CD8-positive, alpha-beta T cell (primary cell): ENCODE measurements at regions of chr12 and their contacts with region 1.

Region 1: GRCh38 chr12:54958048-54958658 is 26.4 kb downstream of the TESPA1 start:
- DNase-seq: peak; percentile 4 to 78 (median 48)
- ATAC-seq: peak; percentile 67
- H3K4me3 ChIP-seq: no peak overlapping the region
- H3K4me3 Mint-ChIP-seq: no peak overlapping the region
- H3K27ac ChIP-seq: no peak overlapping the region
- H3K27ac Mint-ChIP-seq: peak overlapping the region; percentile 52
- H3K4me1 ChIP-seq: peaks cover 75% of the 10 kb centered on the region
- H3K4me1 Mint-ChIP-seq: peaks cover 85% of the 10 kb centered on the region
- H3K27me3 ChIP-seq: no peaks in the 10 kb centered on the region
- H3K27me3 Mint-ChIP-seq: no peaks in the 10 kb centered on the region
- CTCF ChIP-seq: peak; percentile 75

Region 2: GRCh38 chr12:54603173-54603814 is 354.9 kb before region 1 on chr12:
- CTCF ChIA-PET with region 1: no interaction called
- POLR2A ChIA-PET with region 1: no interaction called
- intact Hi-C with region 1: loop called in 1 of 2 experiments (anchors 10 kb)
- DNase-seq: peak; percentile 34 to 77 (median 66)
- ATAC-seq: peak; percentile 98
- H3K4me3 ChIP-seq: no peak overlapping the region
- H3K4me3 Mint-ChIP-seq: no peak overlapping the region
- H3K27ac ChIP-seq: no peak overlapping the region
- H3K27ac Mint-ChIP-seq: no peak overlapping the region
- H3K4me1 ChIP-seq: no peaks in the 10 kb centered on the region
- H3K4me1 Mint-ChIP-seq: peaks cover 4% of the 10 kb centered on the region
- H3K27me3 ChIP-seq: peaks cover 0 to 1% of the 10 kb centered on the region in 2 experiments
- H3K27me3 Mint-ChIP-seq: peaks cover 3% of the 10 kb centered on the region
- CTCF ChIP-seq: peak; percentile 82

Region 3: GRCh38 chr12:54723379-54724256 is 234.5 kb before region 1 on chr12:
- CTCF ChIA-PET with region 1: interaction called, 6 read pairs
- POLR2A ChIA-PET with region 1: no interaction called
- intact Hi-C with region 1: loop called (anchors 1 kb)
- DNase-seq: peak in 5 of 9 experiments; percentile 10 to 70 (median 26)
- ATAC-seq: peak; percentile 72
- H3K4me3 ChIP-seq: no peak overlapping the region
- H3K4me3 Mint-ChIP-seq: no peak overlapping the region
- H3K27ac ChIP-seq: no peak overlapping the region
- H3K27ac Mint-ChIP-seq: no peak overlapping the region
- H3K4me1 ChIP-seq: peaks cover 10% of the 10 kb centered on the region
- H3K4me1 Mint-ChIP-seq: peaks cover 18% of the 10 kb centered on the region
- H3K27me3 ChIP-seq: no peaks in the 10 kb centered on the region
- H3K27me3 Mint-ChIP-seq: peaks cover 6% of the 10 kb centered on the region
- CTCF ChIP-seq: peak; percentile 67

Region 4: GRCh38 chr12:54853995-54854566 is 104.1 kb before region 1 on chr12 and contains the start of gene MUCL1:
- CTCF ChIA-PET with region 1: interaction called, 95 read pairs
- POLR2A ChIA-PET with region 1: no interaction called
- intact Hi-C with region 1: loop called (anchors 1 kb)
- DNase-seq: peak; percentile 52 to 83 (median 72)
- ATAC-seq: peak; percentile 100
- H3K4me3 ChIP-seq: no peak within 1 kb of the TSS
- H3K4me3 Mint-ChIP-seq: no peak within 1 kb of the TSS
- H3K27ac ChIP-seq: no peak within 1 kb of the TSS
- H3K27ac Mint-ChIP-seq: no peak within 1 kb of the TSS
- H3K4me1 ChIP-seq: no peaks in the 10 kb centered on the region
- H3K4me1 Mint-ChIP-seq: peaks cover 4% of the 10 kb centered on the region
- H3K27me3 ChIP-seq: no peaks in the 10 kb centered on the region
- H3K27me3 Mint-ChIP-seq: peaks cover 2% of the 10 kb centered on the region
- CTCF ChIP-seq: peak; percentile 93
- total RNA-seq, gene MUCL1: not detected

Region 5: GRCh38 chr12:54977155-54977554 is 19.0 kb after region 1 on chr12:
- CTCF ChIA-PET with region 1: interaction called, 18 read pairs
- POLR2A ChIA-PET with region 1: interaction called, 6 read pairs
- intact Hi-C with region 1: no loop called
- DNase-seq: no peak
- ATAC-seq: no peak
- H3K4me3 ChIP-seq: no peak overlapping the region
- H3K4me3 Mint-ChIP-seq: peak overlapping the region; percentile 77
- H3K27ac ChIP-seq: no peak overlapping the region
- H3K27ac Mint-ChIP-seq: peak overlapping the region; percentile 86
- H3K4me1 ChIP-seq: peaks cover 92% of the 10 kb centered on the region
- H3K4me1 Mint-ChIP-seq: peaks cover 98% of the 10 kb centered on the region
- H3K27me3 ChIP-seq: no peaks in the 10 kb centered on the region
- H3K27me3 Mint-ChIP-seq: no peaks in the 10 kb centered on the region
- CTCF ChIP-seq: no peak